ENCODE measurements at regions of chr7 and their contacts with region 1.

Region 1: DNA sequence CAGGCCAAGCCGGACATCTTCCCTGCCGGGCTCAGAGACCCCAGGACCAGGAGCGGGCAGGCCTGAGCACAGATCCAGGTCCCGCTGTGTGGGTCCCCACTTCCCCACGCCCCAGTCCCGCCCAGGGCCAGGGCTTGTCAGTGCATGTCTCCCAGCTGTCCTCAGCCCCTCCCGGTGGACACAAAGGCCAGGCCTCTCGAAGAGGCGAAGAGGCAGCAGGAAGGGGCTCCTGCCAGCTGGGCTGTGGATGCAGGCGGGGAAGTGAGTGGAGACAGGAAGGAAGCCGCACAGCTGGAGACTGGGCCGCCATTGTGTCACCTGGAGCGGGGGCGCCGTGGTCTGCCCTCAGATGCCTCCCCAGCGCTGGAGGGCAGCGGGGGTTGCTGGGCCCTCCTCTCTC is 4.8 kb downstream of the GRIFIN start:
- DNase-seq: peak; percentile 70
- H3K27ac ChIP-seq: peak overlapping the region; percentile 92
- CTCF ChIP-seq: no peak

Region 2: DNA sequence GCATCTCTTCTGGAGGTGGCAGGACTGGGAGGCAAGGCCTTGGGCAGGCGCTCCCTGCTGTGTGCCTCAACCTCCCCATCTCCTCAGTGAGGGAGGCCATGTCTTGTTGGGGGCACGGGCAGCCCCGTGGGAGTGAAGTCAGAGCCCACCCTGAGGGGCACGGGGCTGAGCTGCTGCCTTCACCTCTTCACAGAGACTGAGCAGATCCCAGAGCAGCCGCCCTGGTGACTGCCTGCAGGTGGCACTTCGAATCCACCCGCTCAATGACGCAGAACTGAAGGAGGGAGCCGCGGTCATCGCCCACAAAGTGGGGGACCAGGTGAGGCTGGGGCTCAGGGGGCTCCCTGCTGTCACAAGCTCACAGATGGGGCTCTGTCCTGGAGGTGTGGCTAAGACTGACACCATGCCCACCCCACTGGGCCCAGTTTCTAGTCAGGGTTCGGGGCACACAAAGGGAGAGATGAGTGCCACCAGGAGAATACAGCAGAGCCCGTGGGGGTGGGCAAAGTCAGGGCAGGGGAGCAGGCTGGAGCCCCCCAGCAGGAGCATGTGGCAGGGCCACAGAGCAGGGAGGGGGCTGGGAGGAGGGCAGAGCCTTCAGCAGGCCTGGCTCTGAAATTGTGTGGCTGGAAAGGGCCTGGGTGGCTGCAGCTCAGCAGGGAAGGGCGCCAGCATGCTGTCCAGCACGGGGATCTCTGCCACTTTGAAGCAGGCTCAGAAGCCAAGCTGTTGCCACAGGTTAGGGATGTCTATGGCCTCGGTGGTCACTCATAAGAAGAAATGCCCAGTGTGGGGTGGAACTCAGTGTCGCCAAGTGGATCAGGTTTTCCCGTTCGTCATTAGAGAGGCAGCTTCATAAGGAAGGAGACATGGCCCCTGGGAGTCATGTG is 86.8 kb before region 1 on chr7:
- CTCF ChIA-PET with region 1: interaction called, 11 read pairs
- POLR2A ChIA-PET with region 1: no interaction called
- DNase-seq: no peak
- H3K27ac ChIP-seq: peak overlapping the region; percentile 49
- CTCF ChIP-seq: no peak

Region 3: GRCh38 chr7:2431260-2431867 is 40.0 kb before region 1 on chr7:
- CTCF ChIA-PET with region 1: no interaction called
- POLR2A ChIA-PET with region 1: interaction called, 12 read pairs
- DNase-seq: peak; percentile 27
- H3K27ac ChIP-seq: no peak overlapping the region
- CTCF ChIP-seq: no peak; the same call in 1 of the 2 replicates